ENCODE measurements at regions of chr11 and their contacts with region 1.

Region 1: GRCh38 chr11:124108156-124108555 is 7.1 kb upstream of the VWA5A start:
- DNase-seq: peak in 1 of 2 experiments; percentile 50
- H3K4me3 ChIP-seq: no peak overlapping the region
- H3K4me3 Mint-ChIP-seq: no peak overlapping the region
- H3K27ac Mint-ChIP-seq: no peak overlapping the region
- H3K4me1 ChIP-seq: no peaks in the 10 kb centered on the region
- H3K4me1 Mint-ChIP-seq: no peaks in the 10 kb centered on the region
- H3K27me3 ChIP-seq: no peaks in the 10 kb centered on the region
- H3K27me3 Mint-ChIP-seq: peaks cover 21% of the 10 kb centered on the region
- CTCF ChIP-seq: peak in 1 of 2 experiments; percentile 68

Region 2: GRCh38 chr11:123945132-123945531 is 163.0 kb before region 1 on chr11:
- CTCF ChIA-PET with region 1: no interaction called
- POLR2A ChIA-PET with region 1: no interaction called
- intact Hi-C with region 1: no loop called
- DNase-seq: no peak
- H3K4me3 ChIP-seq: no peak overlapping the region
- H3K4me3 Mint-ChIP-seq: no peak overlapping the region
- H3K27ac Mint-ChIP-seq: no peak overlapping the region
- H3K4me1 ChIP-seq: peaks cover 45% of the 10 kb centered on the region
- H3K4me1 Mint-ChIP-seq: peaks cover 22% of the 10 kb centered on the region
- H3K27me3 ChIP-seq: no peaks in the 10 kb centered on the region
- H3K27me3 Mint-ChIP-seq: no peaks in the 10 kb centered on the region
- CTCF ChIP-seq: no peak

Region 3: GRCh38 chr11:124194698-124195410 is 86.7 kb after region 1 on chr11:
- CTCF ChIA-PET with region 1: no interaction called
- POLR2A ChIA-PET with region 1: no interaction called
- intact Hi-C with region 1: loop called (anchors 1 kb)
- DNase-seq: peak; percentile 62 to 68
- H3K4me3 ChIP-seq: no peak overlapping the region
- H3K4me3 Mint-ChIP-seq: no peak overlapping the region
- H3K27ac Mint-ChIP-seq: no peak overlapping the region
- H3K4me1 ChIP-seq: no peaks in the 10 kb centered on the region
- H3K4me1 Mint-ChIP-seq: no peaks in the 10 kb centered on the region
- H3K27me3 ChIP-seq: no peaks in the 10 kb centered on the region
- H3K27me3 Mint-ChIP-seq: peaks cover 13% of the 10 kb centered on the region
- CTCF ChIP-seq: peak; percentile 82 to 88

Region 4: DNA sequence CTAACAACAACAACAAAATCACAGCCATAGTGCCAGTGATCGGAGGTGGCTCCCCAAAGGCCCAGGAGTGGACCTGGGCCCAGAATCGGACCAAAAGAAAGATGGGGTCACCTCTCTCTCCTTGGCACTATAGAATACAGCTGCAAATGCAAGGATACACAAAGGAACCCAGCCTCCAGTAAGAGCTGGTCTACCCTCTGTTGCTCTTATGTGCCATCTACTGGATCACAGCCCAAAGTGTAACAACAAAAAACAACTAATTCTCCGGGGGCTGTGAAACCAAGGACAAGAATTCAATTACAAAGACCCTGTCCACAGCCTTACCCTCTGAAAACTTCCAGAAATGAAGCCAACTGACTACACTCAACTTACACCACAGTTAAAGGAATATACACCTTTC is 169.6 kb after region 1 on chr11:
- CTCF ChIA-PET with region 1: no interaction called
- POLR2A ChIA-PET with region 1: no interaction called
- intact Hi-C with region 1: loop called (anchors 1 kb)
- DNase-seq: no peak
- H3K4me3 ChIP-seq: no peak overlapping the region
- H3K4me3 Mint-ChIP-seq: no peak overlapping the region
- H3K27ac Mint-ChIP-seq: no peak overlapping the region
- H3K4me1 ChIP-seq: peaks cover 17% of the 10 kb centered on the region
- H3K4me1 Mint-ChIP-seq: peaks cover 13% of the 10 kb centered on the region
- H3K27me3 ChIP-seq: no peaks in the 10 kb centered on the region
- H3K27me3 Mint-ChIP-seq: no peaks in the 10 kb centered on the region
- CTCF ChIP-seq: peak; percentile 46 to 54

Region 5: GRCh38 chr11:124329787-124330478 is 221.8 kb after region 1 on chr11:
- CTCF ChIA-PET with region 1: no interaction called
- POLR2A ChIA-PET with region 1: no interaction called
- intact Hi-C with region 1: loop called (anchors 2 kb)
- DNase-seq: no peak
- H3K4me3 ChIP-seq: no peak overlapping the region
- H3K4me3 Mint-ChIP-seq: no peak overlapping the region
- H3K27ac Mint-ChIP-seq: no peak overlapping the region
- H3K4me1 ChIP-seq: no peaks in the 10 kb centered on the region
- H3K4me1 Mint-ChIP-seq: no peaks in the 10 kb centered on the region
- H3K27me3 ChIP-seq: no peaks in the 10 kb centered on the region
- H3K27me3 Mint-ChIP-seq: peaks cover 31% of the 10 kb centered on the region
- CTCF ChIP-seq: no peak